ENCODE measurements at regions of chr3 and their contacts with region 1.

Region 1: DNA sequence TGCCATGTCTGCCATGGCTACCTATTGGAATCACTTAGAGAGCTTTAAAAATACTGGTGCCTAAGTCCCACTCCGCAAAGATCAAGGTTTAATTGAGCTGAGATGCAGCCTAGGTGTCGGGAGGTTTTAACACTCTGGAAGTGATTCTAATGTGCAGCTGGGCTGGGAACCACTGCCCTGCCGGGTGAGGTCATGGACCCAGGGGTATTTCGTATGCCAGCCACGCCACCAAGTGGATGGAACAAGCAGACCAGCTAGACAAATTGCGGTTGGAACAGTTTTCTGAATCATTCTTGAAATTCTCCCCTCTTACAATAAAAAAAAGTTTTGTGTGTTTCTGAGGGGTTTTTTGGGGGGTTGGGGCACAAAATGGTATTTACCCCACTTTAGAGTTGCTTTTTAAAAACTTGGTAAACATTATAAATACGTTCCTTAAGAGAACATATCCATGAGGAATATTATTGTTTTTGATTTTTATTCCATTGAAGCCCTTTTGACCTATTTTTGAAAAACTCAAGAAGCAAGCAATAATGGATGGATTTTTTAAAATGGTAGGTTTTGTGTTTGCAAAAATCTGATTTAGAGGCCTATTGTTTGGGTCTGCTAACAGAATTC is 66.2 kb upstream of the CSTA start:
- DNase-seq: peak; percentile 55
- ATAC-seq: peak; percentile 96
- H3K4me3 Mint-ChIP-seq: no peak overlapping the region
- H3K27ac Mint-ChIP-seq: no peak overlapping the region
- H3K4me1 Mint-ChIP-seq: peaks cover 16% of the 10 kb centered on the region
- H3K27me3 Mint-ChIP-seq: no peaks in the 10 kb centered on the region
- CTCF ChIP-seq: peak; percentile 31

Region 2: DNA sequence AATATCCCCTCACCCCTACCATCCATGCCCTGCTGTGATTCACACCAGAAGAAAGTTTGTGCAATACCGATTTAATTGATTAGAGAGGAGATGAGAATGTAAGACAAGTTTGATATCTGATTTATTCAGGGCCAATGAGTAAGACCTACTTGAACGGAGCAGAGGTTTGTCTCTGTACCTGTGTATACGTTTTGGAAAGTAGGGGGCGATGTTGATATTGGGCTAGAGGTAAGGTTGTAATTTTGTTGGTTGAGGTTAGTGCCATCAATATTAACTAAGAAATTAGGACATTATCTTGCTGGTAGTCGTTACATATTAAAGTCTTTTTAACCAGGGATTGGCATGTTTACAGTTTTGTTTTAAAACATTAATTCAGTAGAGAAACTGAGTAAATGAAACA is 403.3 kb before region 1 on chr3:
- CTCF ChIA-PET with region 1: interaction called, 3 read pairs
- POLR2A ChIA-PET with region 1: no interaction called
- intact Hi-C with region 1: loop called (anchors 1 kb)
- DNase-seq: no peak
- ATAC-seq: peak; percentile 42
- H3K4me3 Mint-ChIP-seq: no peak overlapping the region
- H3K27ac Mint-ChIP-seq: no peak overlapping the region
- H3K4me1 Mint-ChIP-seq: peaks cover 32% of the 10 kb centered on the region
- H3K27me3 Mint-ChIP-seq: no peaks in the 10 kb centered on the region
- CTCF ChIP-seq: no peak

Region 3: DNA sequence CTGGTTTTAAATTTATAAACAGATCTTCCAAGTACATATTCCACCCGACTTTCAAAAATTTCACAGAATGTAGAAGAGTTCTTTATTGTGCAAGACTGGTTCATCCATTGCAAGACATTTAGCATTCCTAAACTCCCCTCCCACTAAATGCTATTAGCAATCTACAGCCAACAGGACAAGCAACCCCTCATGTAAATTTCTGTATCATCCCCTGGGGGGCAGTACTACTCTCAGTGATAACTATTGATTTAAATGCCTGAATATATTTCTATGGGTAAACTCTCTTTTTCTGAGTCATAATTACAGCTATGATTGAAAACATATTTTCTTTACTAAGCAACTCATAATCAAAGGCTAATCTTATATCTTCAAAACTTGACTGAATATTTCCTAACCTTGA is 375.4 kb before region 1 on chr3:
- CTCF ChIA-PET with region 1: interaction called, 13 read pairs
- POLR2A ChIA-PET with region 1: no interaction called
- intact Hi-C with region 1: loop called (anchors 1 kb)
- DNase-seq: no peak
- ATAC-seq: peak; percentile 42
- H3K4me3 Mint-ChIP-seq: no peak overlapping the region
- H3K27ac Mint-ChIP-seq: no peak overlapping the region
- H3K4me1 Mint-ChIP-seq: peaks cover 12% of the 10 kb centered on the region
- H3K27me3 Mint-ChIP-seq: no peaks in the 10 kb centered on the region
- CTCF ChIP-seq: no peak

Region 4: GRCh38 chr3:121979734-121980449 is 279.0 kb before region 1 on chr3:
- CTCF ChIA-PET with region 1: interaction called, 10 read pairs
- POLR2A ChIA-PET with region 1: no interaction called
- intact Hi-C with region 1: loop called (anchors 1 kb)
- DNase-seq: no peak
- ATAC-seq: no peak
- H3K4me3 Mint-ChIP-seq: no peak overlapping the region
- H3K27ac Mint-ChIP-seq: peak overlapping the region; percentile 24
- H3K4me1 Mint-ChIP-seq: peaks cover 27% of the 10 kb centered on the region
- H3K27me3 Mint-ChIP-seq: no peaks in the 10 kb centered on the region
- CTCF ChIP-seq: no peak

Region 5: GRCh38 chr3:122427857-122428471 is 169.1 kb after region 1 on chr3:
- CTCF ChIA-PET with region 1: no interaction called
- POLR2A ChIA-PET with region 1: no interaction called
- intact Hi-C with region 1: no loop called
- DNase-seq: no peak
- ATAC-seq: no peak
- H3K4me3 Mint-ChIP-seq: no peak overlapping the region
- H3K27ac Mint-ChIP-seq: no peak overlapping the region
- H3K4me1 Mint-ChIP-seq: no peaks in the 10 kb centered on the region
- H3K27me3 Mint-ChIP-seq: no peaks in the 10 kb centered on the region
- CTCF ChIP-seq: no peak

Measured in activated B cell treated with CpG ODN at 0.5 μM for 24 hours (primary cell).